Mammary epithelial cell (primary cell): ENCODE measurements at regions of chr14 and their contacts with region 1.

Region 1: DNA sequence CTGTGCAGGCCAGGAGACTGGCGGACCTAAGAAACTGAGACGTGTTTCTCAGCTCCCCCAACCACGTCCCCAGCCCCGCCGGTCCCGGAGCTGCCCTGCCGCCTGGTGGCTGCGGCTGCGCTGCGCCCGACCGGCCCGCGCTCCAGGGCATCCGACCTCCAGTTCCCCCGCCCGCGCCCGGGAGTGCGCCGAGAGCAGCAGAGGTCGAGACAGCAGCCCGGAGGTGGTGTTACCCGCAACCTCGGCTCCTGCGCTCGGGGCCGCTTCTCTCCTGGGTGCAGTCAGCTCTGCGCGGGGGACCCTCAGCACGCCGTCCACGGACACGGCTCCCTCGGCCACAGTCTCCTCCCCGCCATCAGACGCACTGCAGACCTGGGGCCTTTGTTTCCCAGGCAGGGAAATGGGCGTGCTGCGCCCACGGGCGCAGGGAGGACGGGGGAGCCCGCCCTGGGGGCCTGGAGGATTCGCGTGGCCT is 21.6 kb upstream of the GPR132 start:
- DNase-seq: peak; percentile 76
- H3K4me3 ChIP-seq: peak overlapping the region; percentile 42 to 51 (median 50)
- H3K27ac ChIP-seq: peak overlapping the region; percentile 54
- H3K4me1 ChIP-seq: peaks cover 44% of the 10 kb centered on the region
- H3K27me3 ChIP-seq: no peaks in the 10 kb centered on the region
- CTCF ChIP-seq: peak; percentile 62 to 76

Region 2: GRCh38 chr14:104586832-104587620 is 499.8 kb before region 1 on chr14:
- CTCF ChIA-PET with region 1: no interaction called
- dilution Hi-C with region 1: no loop called
- in situ Hi-C with region 1: no loop called
- intact Hi-C with region 1: no loop called
- DNase-seq: no peak
- H3K4me3 ChIP-seq: no peak overlapping the region
- H3K27ac ChIP-seq: no peak overlapping the region
- H3K4me1 ChIP-seq: no peaks in the 10 kb centered on the region
- H3K27me3 ChIP-seq: no peaks in the 10 kb centered on the region
- CTCF ChIP-seq: no peak

Region 3: GRCh38 chr14:104895786-104896661 is 190.8 kb before region 1 on chr14:
- CTCF ChIA-PET with region 1: interaction called, 14 read pairs
- dilution Hi-C with region 1: no loop called
- in situ Hi-C with region 1: no loop called
- intact Hi-C with region 1: no loop called
- DNase-seq: no peak
- H3K4me3 ChIP-seq: no peak overlapping the region
- H3K27ac ChIP-seq: no peak overlapping the region
- H3K4me1 ChIP-seq: peaks cover 11% of the 10 kb centered on the region
- H3K27me3 ChIP-seq: no peaks in the 10 kb centered on the region
- CTCF ChIP-seq: no peak

Region 4: DNA sequence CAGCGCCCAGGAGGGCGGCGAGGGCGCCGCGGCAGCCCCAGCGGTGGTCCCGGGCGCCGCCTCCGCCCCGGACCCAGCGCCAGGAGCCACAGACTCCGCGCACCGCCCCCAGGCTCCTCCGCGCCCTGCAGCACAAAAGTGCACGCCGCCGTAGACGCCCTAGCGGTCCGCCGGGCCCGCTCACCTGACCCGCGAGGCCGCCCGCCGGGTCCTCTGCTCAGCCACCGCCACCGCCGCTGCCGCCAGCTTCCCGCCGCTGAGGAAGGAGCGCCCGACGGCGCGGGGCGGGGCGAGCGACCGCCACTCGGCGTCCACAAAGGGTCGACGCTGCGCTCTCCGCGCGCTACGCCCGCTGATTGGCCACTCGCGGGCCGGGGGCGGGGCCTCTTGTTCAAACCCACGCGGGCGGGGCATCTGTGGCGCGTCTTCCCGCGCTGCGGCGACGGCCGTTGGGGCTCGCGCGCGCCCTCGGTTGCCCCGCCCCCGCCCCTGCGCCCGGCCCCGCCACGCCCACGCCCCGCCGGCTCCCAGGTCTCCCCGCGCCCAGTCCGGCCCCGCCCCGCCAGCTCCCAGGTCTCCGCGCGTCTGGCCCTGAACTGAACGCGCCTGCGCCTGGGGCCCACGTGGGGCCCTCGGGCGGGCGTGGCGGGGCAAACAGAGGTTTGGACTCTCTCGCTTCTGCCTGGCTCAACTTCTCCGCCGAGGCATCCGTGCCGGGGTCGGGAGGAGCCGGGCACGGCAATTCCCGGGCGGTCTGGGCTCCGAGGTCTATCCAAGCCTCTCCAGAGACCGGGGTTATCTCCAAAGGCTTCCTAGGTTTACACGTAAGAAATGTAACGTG is 65.8 kb before region 1 on chr14 and contains the start of gene CDCA4:
- CTCF ChIA-PET with region 1: no interaction called
- dilution Hi-C with region 1: no loop called
- in situ Hi-C with region 1: no loop called
- intact Hi-C with region 1: loop called (anchors 5 kb)
- DNase-seq: peak; percentile 96
- H3K4me3 ChIP-seq: peak within 1 kb of the TSS; percentile 82 to 97 (median 95)
- H3K27ac ChIP-seq: peak within 1 kb of the TSS; percentile 94
- H3K4me1 ChIP-seq: peaks cover 68% of the 10 kb centered on the region
- H3K27me3 ChIP-seq: no peaks in the 10 kb centered on the region
- CTCF ChIP-seq: no peak
- total RNA-seq, gene CDCA4: 38.2 to 61.7 TPM

Region 5: DNA sequence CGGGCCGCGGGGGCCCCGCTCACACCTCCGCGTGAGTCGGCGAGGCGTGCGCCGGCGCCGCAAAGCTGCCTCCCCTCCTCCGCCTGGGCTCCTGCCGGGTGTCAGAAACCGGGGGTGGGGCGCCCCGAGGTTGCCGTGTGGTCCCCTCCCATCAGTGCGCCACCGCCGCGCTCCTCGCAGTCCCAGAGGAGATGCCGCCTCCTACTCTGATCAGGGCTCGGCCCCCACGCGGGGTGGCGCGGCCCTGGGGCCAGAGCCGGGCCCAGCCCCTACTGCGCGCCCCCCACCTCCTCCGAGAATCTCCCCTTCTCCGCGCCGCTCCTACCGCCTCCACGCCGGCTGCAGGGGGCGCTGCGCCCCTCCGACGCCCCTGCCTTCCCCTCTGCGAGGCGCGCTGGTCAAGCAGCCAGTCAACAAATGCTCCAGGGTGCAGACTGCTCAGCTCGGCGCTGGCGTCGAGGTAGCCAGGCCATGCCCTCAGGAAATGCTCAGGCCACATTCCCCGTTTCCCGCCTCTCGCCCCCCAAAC is 82.2 kb after region 1 on chr14:
- CTCF ChIA-PET with region 1: interaction called, 14 read pairs
- dilution Hi-C with region 1: no loop called
- in situ Hi-C with region 1: loop called (anchors 5 to 10 kb)
- intact Hi-C with region 1: loop called (anchors 1 kb)
- DNase-seq: peak; percentile 29
- H3K4me3 ChIP-seq: peak overlapping the region in 2 of 3 experiments; percentile 34 to 36
- H3K27ac ChIP-seq: no peak overlapping the region
- H3K4me1 ChIP-seq: peaks cover 31% of the 10 kb centered on the region
- H3K27me3 ChIP-seq: no peaks in the 10 kb centered on the region
- CTCF ChIP-seq: peak; percentile 18 to 56

Region 6: DNA sequence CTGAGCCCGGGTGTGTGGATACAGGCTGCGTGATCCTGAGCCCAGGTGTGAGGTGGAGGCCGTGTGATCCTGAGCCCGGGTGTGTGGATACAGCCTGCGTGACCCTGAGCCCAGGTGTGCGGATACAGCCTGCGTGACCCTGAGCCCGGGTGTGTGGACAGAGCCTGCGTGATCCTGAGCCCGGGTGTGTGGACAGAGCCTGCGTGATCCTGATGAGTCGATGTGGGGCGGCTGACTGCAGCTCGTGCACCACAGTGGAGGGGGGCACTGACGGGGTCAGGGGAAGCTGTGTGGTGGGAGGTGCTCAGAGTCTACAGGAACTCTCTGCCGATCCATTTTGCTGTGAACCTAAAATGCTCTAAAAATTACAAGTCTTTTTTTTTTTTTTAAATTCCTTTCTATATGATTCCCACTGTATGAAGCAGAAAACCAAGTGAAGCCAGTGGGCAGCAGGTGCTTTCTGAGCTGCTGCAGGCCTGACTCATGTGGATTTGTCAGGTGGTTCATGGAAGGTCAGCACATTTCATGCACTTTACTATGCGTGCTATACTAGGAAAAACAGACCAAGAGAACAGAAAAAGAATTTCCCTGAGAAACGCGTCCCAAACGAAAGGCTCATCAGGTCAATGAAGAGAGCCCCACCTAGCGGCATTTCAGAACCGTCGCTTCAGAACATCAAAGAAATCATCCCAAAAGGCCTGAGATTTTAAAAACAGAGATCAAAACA is 194.7 kb after region 1 on chr14:
- CTCF ChIA-PET with region 1: no interaction called
- dilution Hi-C with region 1: no loop called
- in situ Hi-C with region 1: loop called in 1 of 2 experiments (anchors 25 kb)
- intact Hi-C with region 1: loop called (anchors 1 kb)
- DNase-seq: peak; percentile 58
- H3K4me3 ChIP-seq: no peak overlapping the region
- H3K27ac ChIP-seq: no peak overlapping the region
- H3K4me1 ChIP-seq: no peaks in the 10 kb centered on the region
- H3K27me3 ChIP-seq: no peaks in the 10 kb centered on the region
- CTCF ChIP-seq: peak; percentile 70 to 73

Region 7: GRCh38 chr14:105351920-105352851 is 265.3 kb after region 1 on chr14:
- CTCF ChIA-PET with region 1: interaction called, 3 read pairs
- dilution Hi-C with region 1: no loop called
- in situ Hi-C with region 1: loop called in 1 of 2 experiments (anchors 10 kb)
- intact Hi-C with region 1: loop called (anchors 1 kb)
- DNase-seq: peak; percentile 82
- H3K4me3 ChIP-seq: no peak overlapping the region
- H3K27ac ChIP-seq: no peak overlapping the region
- H3K4me1 ChIP-seq: no peaks in the 10 kb centered on the region
- H3K27me3 ChIP-seq: no peaks in the 10 kb centered on the region
- CTCF ChIP-seq: peak; percentile 85 to 90